ENCODE measurements at regions of chr4 and their contacts with region 1.

Region 1: GRCh38 chr4:181528570-181529184 is 714.5 kb upstream of the TENM3 start:
- DNase-seq: peak; percentile 46 to 95 (median 78)

Region 2: DNA sequence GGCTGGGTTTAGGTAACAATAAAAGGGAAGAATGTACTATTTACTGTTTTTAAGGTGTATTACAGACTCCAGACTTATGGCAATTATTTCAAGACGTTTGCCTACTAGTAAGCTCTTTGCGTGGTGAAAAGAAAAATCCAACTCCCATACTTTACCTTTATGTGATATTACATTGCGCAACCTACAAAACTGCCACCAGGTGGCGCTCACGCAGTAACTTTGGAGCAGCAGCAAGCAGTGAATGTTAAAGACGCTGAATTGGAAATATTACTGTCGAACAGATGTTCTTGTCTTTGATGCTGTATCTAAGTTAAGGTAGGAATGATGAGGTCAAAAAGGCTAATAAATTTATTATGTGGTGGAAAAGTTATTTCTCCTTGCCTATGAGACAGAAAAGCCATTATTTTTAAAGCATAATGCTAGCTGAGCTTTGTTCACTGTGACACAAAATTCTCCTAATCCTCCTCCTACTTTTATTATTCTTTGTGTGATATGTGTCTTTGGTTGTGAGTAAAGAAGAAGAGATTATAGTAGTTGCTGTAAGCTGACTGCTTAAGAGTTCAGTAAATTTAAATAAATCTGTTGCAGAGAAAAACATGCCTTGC is 385.3 kb before region 1 on chr4:
- intact Hi-C with region 1: loop called (anchors 1 kb)
- DNase-seq: peak; percentile 77 to 97 (median 86)

Region 3: DNA sequence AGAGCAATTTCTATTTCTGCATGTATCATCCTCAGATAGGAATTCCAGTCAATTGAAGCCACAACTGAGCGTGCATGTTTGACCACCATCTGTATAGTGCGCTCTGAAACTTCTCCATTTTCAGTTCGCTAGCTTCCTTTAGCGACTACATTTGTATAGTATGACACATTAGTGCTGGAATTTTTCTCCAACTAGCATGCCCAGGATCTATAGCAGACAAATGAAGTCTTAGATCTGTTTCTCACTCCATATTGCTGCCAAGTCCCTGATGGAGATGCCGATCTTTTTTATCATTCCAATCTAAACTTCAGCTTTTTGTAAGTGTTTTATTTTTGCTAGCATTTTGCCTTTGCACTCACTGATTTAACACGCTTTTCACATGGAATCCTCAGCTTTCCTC is 60.2 kb before region 1 on chr4:
- intact Hi-C with region 1: no loop called
- DNase-seq: no peak

Region 4: DNA sequence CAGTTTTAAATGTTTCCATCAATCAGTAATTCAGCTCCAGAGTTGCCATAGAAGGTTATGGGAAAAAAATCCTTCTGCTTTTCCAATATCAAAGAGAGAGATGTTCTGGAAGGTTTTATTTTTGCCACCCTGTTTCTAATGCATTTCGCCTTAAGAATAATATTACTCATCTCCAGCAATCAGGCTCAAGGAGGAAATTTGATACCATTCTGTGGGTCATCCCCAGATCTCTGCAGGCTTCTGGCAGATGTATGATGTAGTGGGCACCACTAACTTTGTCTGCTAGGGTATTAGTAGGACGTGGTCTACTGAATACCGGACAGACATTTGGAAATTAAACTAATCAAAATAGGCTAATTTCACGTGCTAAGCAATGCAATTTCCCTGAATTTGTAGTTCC is 69.1 kb after region 1 on chr4:
- intact Hi-C with region 1: no loop called
- DNase-seq: no peak